Transverse colon (tissue), 4 donors: ENCODE measurements at regions of chr18 and their contacts with region 1.

Region 1: GRCh38 chr18:58781627-58782194 is 83.0 kb upstream of the ZNF532 start:
- DNase-seq: peak; percentile 80
- H3K4me3 ChIP-seq: no peak overlapping the region
- H3K27ac ChIP-seq: no peak overlapping the region
- H3K4me1 ChIP-seq: peaks cover 0 to 17% (median 11%) of the 10 kb centered on the region in 4 donors
- H3K27me3 ChIP-seq: no peaks in the 10 kb centered on the region
- CTCF ChIP-seq: peak; percentile 84 to 95 (median 87)
- EP300 ChIP-seq: no peak
- POLR2A ChIP-seq: no peak

Region 2: DNA sequence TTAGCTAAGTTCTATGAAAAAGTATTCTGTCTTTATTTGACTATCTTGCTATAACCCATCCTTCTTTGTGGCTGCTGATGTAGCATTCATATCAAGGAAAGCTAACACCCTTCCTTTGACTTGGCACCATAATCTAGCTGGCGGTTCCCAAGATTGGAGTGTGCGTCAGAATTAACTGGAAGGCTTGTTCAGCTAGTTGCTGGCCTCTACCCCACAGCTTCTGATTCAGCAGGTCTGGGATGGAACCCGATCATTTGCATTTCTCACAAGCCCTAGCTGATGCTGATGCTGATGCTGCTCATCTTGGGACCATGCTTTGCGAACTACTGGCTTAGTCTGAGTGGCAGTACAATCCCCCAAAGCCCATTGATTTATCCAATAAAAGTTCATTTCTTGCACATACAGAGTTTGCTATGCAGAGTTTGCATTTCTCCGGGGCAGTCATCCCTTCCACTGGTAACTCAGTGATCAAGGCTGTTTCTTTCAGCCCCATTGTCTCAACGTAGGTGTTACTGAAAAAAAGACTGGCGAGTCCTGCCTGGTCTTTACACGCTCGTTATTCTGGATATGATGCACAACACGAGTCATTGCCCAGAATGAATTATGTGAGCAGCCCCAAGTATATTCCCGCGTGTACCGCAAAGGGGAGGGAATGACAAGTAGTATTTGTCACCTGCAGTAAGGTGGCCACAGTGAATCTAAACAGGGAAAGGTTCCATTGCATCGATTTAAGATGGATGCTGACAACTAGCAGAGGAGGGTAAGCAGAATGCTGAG is 179.4 kb after region 1 on chr18:
- in situ Hi-C with region 1: no loop called
- intact Hi-C with region 1: loop called (anchors 10 kb)
- DNase-seq: no peak
- H3K4me3 ChIP-seq: no peak overlapping the region
- H3K27ac ChIP-seq: no peak overlapping the region
- H3K4me1 ChIP-seq: peaks cover 0 to 17% (median 6%) of the 10 kb centered on the region in 4 donors
- H3K27me3 ChIP-seq: no peaks in the 10 kb centered on the region
- CTCF ChIP-seq: no peak
- EP300 ChIP-seq: no peak
- POLR2A ChIP-seq: no peak

Region 3: DNA sequence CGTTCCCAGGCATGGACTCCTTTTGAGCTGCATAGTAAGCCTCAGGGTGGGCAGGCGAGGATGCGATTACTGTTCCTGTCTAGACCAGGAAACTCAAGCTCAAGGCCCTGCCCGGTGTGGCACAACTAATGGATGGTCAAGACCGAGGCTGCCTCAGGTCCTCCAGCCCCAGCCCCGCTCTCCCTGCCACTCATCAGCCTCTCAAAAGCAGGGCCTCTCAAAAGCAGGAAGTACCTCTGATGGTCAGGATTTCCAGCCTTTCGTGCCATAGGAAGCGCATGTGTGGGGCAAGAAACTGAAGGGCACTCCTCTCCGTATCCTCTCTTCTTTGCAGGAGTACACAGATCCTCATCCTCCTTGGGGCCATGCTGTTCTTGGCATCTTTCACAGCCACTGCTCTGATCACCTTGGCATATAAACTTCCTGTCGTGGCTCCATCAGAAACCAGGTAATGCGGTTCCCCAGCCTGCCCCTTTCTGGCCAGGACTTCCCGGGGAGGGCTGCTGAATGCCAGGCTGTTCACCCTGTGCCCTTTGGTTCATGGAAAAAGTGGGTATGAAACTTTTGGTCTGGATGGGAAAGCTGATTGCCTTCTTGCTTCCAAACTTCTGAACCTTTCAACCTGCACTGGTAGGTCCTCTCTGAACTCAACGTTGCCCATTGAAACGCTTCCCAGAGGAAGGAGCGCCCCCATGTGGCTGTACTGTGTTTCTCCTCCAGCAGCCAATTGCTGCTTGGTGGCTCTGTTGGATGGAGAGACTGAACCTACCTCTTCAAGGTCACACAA is 275.2 kb after region 1 on chr18:
- in situ Hi-C with region 1: loop called in 3 of 4 experiments (anchors 5 to 10 kb)
- intact Hi-C with region 1: no loop called
- DNase-seq: peak; percentile 83
- H3K4me3 ChIP-seq: no peak overlapping the region
- H3K27ac ChIP-seq: no peak overlapping the region
- H3K4me1 ChIP-seq: peaks cover 0 to 4% (median 0%) of the 10 kb centered on the region in 4 donors
- H3K27me3 ChIP-seq: no peaks in the 10 kb centered on the region
- CTCF ChIP-seq: peak; percentile 51 to 79 (median 64)
- EP300 ChIP-seq: no peak
- POLR2A ChIP-seq: no peak

Region 4: DNA sequence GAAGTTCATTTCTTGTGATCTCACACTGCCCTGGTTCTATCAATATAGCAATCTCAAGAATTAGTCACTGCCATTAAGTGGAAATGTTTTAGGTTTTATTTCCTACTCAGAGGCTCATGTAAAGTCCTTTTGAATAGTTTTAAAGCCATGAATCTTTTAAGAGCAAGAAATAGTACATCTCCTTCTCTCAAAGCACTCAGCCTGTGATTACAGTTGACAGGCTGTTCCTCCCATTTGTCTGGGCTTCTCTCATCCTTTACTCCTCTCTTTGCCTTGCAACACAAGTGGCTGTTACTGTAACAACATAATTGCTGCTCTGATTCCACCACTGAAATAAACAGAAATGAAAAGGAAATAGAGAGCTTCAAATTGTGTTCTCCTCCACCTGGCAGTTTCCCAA is 456.7 kb after region 1 on chr18:
- in situ Hi-C with region 1: no loop called
- intact Hi-C with region 1: no loop called
- DNase-seq: no peak
- H3K4me3 ChIP-seq: no peak overlapping the region
- H3K27ac ChIP-seq: no peak overlapping the region
- H3K4me1 ChIP-seq: no peaks in the 10 kb centered on the region
- H3K27me3 ChIP-seq: no peaks in the 10 kb centered on the region
- CTCF ChIP-seq: no peak
- EP300 ChIP-seq: no peak
- POLR2A ChIP-seq: no peak